ENCODE measurements at regions of chr10 and their contacts with region 1.

Region 1: DNA sequence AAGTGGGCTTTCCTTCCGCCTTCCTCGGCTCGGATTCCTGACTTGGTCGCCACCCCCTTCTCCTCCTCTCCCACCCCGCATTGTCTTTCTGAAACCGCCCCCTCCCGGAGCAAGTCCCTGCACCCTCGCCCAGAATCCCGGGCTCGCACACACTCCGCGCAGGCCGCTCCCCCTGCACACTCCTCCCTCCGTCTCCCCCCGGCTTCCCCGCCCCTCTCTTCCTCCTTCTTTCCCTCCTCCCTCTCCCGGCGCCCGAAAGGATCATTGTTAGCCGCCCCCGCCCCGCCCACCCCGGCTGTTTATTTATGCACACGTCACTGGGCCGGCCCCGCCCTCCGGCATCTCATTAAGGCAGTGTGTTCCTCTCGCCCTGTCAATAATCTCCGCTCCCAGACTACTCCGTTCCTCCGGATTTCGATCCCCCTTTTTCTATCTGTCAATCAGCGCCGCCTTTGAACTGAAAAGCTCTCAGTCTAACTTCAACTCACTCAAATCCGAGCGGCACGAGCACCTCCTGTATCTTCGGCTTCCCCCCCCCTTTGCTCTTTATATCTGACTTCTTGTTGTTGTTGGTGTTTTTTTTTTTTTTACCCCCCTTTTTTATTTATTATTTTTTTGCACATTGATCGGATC is at the start of gene TCF7L2:
- DNase-seq: peak; percentile 98
- H3K4me3 ChIP-seq: peak within 1 kb of the TSS; percentile 63
- H3K27ac ChIP-seq: peak within 1 kb of the TSS; percentile 90
- H3K4me1 ChIP-seq: peaks cover 28% of the 10 kb centered on the region
- H3K27me3 ChIP-seq: no peaks in the 10 kb centered on the region
- CTCF ChIP-seq: no peak
- total RNA-seq, gene TCF7L2: 16.8 and 20.9 TPM in 2 replicates

Region 2: GRCh38 chr10:113058523-113058961 is 108.6 kb after region 1 on chr10:
- CTCF ChIA-PET with region 1: no interaction called
- POLR2A ChIA-PET with region 1: interaction called, 10 read pairs
- intact Hi-C with region 1: loop called (anchors 2 kb)
- DNase-seq: peak; percentile 85
- H3K4me3 ChIP-seq: peak overlapping the region; percentile 20
- H3K27ac ChIP-seq: peak overlapping the region; percentile 92
- H3K4me1 ChIP-seq: peaks cover 89% of the 10 kb centered on the region
- H3K27me3 ChIP-seq: no peaks in the 10 kb centered on the region
- CTCF ChIP-seq: no peak

Region 3: DNA sequence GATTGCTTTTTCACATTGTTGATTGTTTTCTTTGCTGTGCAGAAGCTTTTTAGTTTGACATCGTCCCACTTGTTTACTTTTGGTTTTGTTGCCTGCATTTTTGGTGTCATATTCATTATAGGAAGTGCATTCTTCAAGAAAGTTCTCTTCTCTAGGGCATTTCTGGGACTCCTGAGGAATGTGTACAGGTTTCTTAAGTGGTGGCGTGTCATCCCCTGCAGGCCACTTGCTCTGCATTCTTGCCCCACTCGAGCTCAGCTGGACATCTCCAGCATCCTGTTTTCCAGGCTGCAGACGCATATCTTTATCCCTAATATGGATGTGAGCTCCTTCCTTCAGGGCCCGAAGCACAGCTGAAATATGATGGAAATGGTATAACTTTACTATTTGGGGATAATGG is 347.2 kb after region 1 on chr10:
- CTCF ChIA-PET with region 1: no interaction called
- POLR2A ChIA-PET with region 1: no interaction called
- intact Hi-C with region 1: no loop called
- DNase-seq: no peak
- H3K4me3 ChIP-seq: no peak overlapping the region
- H3K27ac ChIP-seq: no peak overlapping the region
- H3K4me1 ChIP-seq: no peaks in the 10 kb centered on the region
- H3K27me3 ChIP-seq: no peaks in the 10 kb centered on the region
- CTCF ChIP-seq: no peak